ENCODE measurements at regions of chr13 and their contacts with region 1.

Region 1: GRCh38 chr13:100502446-100502845 is 86.1 kb downstream of the GGACT start:
- DNase-seq: no peak
- H3K4me3 Mint-ChIP-seq: no peak overlapping the region
- H3K27ac Mint-ChIP-seq: no peak overlapping the region
- H3K4me1 Mint-ChIP-seq: peaks cover 15% of the 10 kb centered on the region
- H3K27me3 Mint-ChIP-seq: peaks cover 2% of the 10 kb centered on the region

Region 2: DNA sequence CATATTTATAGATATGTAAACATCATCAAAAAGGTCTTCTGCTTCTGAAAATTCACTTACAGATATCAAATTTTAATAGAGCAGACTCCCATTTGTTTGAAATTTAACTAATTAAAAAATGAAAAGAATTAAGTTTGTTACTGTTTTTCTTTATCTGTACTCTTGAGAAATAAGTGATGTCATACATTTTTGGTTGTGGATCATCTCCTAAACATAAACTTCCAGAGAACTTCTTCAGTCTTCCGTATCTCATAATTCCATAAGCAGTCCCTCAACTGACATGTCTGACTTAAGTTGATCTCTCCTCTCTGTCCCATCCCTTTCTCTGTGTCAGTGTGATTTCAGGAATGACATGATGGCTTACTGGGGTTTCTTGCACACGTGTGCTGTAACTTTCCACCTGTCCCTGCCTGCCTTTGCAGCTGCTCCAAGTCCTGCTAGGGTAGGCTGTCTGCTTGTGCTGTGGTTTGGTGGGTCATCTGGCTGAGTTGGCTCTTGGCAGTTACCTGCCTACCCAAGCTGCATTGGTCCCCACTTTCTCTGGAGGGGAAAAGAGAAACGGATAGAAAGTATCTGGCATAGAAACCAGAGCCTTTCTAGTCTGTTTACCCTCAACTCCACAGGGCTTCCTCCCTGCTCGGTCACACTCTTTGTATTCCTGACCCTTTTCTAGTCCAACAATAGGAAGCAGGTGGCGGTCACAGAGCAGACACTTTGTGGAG is 41.0 kb before region 1 on chr13:
- CTCF ChIA-PET with region 1: no interaction called
- POLR2A ChIA-PET with region 1: no interaction called
- DNase-seq: no peak
- H3K4me3 Mint-ChIP-seq: no peak overlapping the region
- H3K27ac Mint-ChIP-seq: no peak overlapping the region
- H3K4me1 Mint-ChIP-seq: no peaks in the 10 kb centered on the region
- H3K27me3 Mint-ChIP-seq: no peaks in the 10 kb centered on the region

Region 3: GRCh38 chr13:100483841-100484381 is 18.5 kb before region 1 on chr13:
- CTCF ChIA-PET with region 1: interaction called, 10 read pairs
- POLR2A ChIA-PET with region 1: no interaction called
- DNase-seq: no peak
- H3K4me3 Mint-ChIP-seq: no peak overlapping the region
- H3K27ac Mint-ChIP-seq: no peak overlapping the region
- H3K4me1 Mint-ChIP-seq: peaks cover 19% of the 10 kb centered on the region
- H3K27me3 Mint-ChIP-seq: no peaks in the 10 kb centered on the region